ENCODE measurements at regions of chr9 and their contacts with region 1.

Region 1: GRCh38 chr9:35646533-35647265 is 4.0 kb downstream of the SIT1 start:
- DNase-seq: peak; percentile 93
- H3K4me3 ChIP-seq: peak overlapping the region; percentile 92
- H3K27ac ChIP-seq: peak overlapping the region; percentile 89
- H3K4me1 ChIP-seq: peaks cover 46% of the 10 kb centered on the region
- CTCF ChIP-seq: peak; percentile 83

Region 2: GRCh38 chr9:35603987-35604577 is 42.6 kb before region 1 on chr9:
- CTCF ChIA-PET with region 1: interaction called, 3 read pairs
- POLR2A ChIA-PET with region 1: interaction called, 8 read pairs
- intact Hi-C with region 1: loop called (anchors 1 kb)
- DNase-seq: peak; percentile 100
- H3K4me3 ChIP-seq: peak overlapping the region; percentile 90
- H3K27ac ChIP-seq: peak overlapping the region; percentile 79
- H3K4me1 ChIP-seq: peaks cover 26% of the 10 kb centered on the region
- CTCF ChIP-seq: peak; percentile 90

Region 3: GRCh38 chr9:35628389-35628991 is 18.2 kb before region 1 on chr9:
- CTCF ChIA-PET with region 1: interaction called, 6 read pairs
- POLR2A ChIA-PET with region 1: interaction called, 110 read pairs
- intact Hi-C with region 1: no loop called
- DNase-seq: no peak
- H3K4me3 ChIP-seq: no peak overlapping the region
- H3K27ac ChIP-seq: no peak overlapping the region
- H3K4me1 ChIP-seq: peaks cover 23% of the 10 kb centered on the region
- CTCF ChIP-seq: no peak

Region 4: GRCh38 chr9:35636135-35636876 is 10.4 kb before region 1 on chr9:
- CTCF ChIA-PET with region 1: interaction called, 5 read pairs
- POLR2A ChIA-PET with region 1: interaction called, 16 read pairs
- intact Hi-C with region 1: no loop called
- DNase-seq: peak; percentile 82
- H3K4me3 ChIP-seq: peak overlapping the region; percentile 28
- H3K27ac ChIP-seq: peak overlapping the region; percentile 94
- H3K4me1 ChIP-seq: peaks cover 71% of the 10 kb centered on the region
- CTCF ChIP-seq: no peak

Region 5: DNA sequence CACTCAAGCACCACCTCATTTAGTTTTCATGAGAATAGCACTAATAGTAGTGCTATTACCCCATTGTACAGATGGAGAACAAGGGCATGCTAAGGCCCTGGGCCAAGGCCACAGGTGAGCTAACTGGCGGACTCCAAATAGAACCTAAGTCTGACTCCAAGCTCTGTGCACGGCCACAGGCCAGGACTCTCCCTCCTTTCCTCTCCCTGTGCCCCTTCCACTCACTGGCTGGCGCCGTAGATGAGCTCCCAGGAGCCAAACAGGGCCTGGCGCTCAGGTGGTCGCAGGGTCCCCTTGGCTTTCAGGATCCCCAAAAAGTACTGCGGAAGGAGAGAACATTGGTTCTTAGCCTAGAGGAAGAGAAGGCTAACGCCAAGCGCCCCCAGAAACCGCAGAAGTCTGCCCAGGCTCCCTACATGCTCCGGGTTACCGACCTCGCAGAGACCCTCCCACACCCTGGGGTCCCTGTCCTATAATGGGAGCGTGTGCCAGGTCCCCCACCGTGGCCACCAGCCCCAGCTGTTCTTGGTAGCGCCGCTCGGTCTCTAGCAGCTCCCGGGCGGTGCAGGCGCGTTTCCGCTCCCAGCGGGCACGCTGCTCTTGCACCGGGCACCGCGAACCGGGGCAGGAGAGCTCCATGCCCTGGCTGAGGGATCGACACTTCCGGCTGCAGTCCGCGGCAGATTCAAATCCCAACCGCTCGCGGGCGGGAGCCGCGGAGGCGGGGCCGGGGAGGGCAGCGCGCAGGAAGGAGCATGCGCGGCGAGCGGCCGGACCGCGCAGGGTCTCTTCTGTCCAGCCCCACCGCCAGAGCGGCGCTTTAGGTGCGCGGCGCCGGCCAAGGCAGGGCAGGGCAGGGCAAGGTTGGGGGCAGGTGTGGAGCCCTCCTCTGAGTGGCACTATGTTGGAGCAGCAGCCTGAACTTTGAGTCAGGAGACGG is 18.1 kb after region 1 on chr9 and contains the start of gene ARHGEF39:
- CTCF ChIA-PET with region 1: no interaction called
- POLR2A ChIA-PET with region 1: interaction called, 27 read pairs
- intact Hi-C with region 1: no loop called
- DNase-seq: peak; percentile 88
- H3K4me3 ChIP-seq: peak within 1 kb of the TSS; percentile 78
- H3K27ac ChIP-seq: peak within 1 kb of the TSS; percentile 85
- H3K4me1 ChIP-seq: peaks cover 62% of the 10 kb centered on the region
- CTCF ChIP-seq: peak; percentile 67
- total RNA-seq, gene ARHGEF39: 22.7 and 30.8 TPM in 2 replicates